Posterior cingulate gyrus (tissue), 11 donors: ENCODE measurements at regions of chr11 and their contacts with region 1.

Region 1: GRCh38 chr11:111777094-111778046 is 11.2 kb upstream of the PPP2R1B start:
- DNase-seq: peak in 2 of 10 donors; percentile 22 to 41

Region 2: GRCh38 chr11:111454561-111455192 is 322.7 kb before region 1 on chr11:
- intact Hi-C with region 1: loop called (anchors 5 kb)
- DNase-seq: peak in 9 of 10 donors; percentile 39 to 92 (median 77)

Region 3: DNA sequence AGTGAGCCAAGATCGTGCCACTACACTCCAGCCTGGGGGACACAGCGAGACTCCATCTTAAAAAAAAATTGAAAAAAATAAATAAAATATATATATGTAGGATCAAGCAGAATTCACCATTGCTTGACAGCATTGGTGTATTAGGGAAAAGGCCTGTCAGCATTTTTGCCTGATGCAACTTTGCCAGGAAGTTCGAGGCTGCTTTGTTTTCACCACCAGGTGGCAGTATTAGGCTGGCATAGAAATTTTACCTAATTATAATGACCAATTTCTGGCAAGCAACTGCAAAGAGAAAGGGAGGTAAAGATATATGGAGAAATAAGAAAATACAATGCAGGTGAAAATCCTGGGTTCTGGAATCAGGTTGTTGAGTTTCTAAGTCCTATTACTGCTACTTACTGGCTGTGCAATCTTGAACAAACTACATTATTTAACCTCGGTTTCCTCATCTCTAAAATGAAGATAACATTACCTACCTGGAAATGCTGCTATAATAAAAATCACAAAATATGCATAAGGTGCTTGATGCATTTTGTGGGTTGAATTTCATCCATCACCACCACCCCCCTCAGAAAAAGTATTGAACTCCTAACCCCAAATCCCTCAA is 212.2 kb before region 1 on chr11:
- intact Hi-C with region 1: loop called (anchors 1 kb)
- DNase-seq: peak in 9 of 10 donors; percentile 30 to 88 (median 64)

Region 4: DNA sequence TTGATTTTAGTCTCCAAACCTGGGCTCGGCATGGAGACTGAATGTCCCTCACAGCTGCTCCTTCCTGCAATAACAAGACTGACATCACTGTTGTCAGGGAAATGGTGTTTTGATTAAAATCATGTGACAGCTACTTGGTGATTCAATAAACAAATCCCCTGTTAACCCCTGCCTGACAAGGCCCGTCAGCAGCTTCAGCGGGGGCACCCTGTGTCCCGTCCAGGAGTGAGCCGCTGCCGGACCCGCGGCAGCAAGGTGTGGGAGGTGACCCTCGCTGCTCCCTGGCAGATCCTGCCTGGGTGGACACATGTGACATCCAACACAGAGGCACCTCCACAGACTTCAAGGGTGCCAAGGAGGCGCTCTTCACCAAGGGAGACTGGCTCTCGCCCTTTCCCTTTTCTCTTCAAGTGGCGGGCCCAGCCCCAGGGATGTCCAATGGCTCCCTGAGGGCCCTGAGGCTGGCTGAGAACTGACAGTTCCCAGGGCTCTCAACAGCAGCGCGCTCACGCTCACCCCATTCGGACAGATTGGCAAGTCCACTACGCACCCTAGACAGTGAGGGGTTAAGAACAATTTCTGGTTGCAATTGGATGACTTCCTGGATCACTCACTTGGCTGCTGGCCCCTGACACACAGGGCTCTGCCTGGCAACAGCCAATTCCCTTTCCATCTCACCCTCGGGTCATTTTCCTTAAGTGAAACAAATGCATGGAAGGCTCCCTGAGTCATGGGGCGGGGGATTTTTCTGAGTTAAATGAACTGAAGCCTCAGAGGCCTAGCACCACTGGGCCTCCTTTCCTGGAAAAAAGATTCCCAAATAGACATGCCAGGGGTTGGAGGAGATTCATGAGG is 41.9 kb before region 1 on chr11:
- intact Hi-C with region 1: no loop called
- DNase-seq: peak in 9 of 10 donors; percentile 67 to 95 (median 76)